Naive thymus-derived CD4-positive, alpha-beta T cell (primary cell): ENCODE measurements at regions of chr11 and their contacts with region 1.

Region 1: GRCh38 chr11:129364143-129364654 is 11.4 kb upstream of the BARX2 start:
- DNase-seq: peak; percentile 47 to 80 (median 71)
- ATAC-seq: peak; percentile 99
- H3K4me3 ChIP-seq: no peak overlapping the region
- H3K4me3 Mint-ChIP-seq: no peak overlapping the region
- H3K27ac ChIP-seq: no peak overlapping the region
- H3K27ac Mint-ChIP-seq: no peak overlapping the region
- H3K4me1 ChIP-seq: peaks cover 0 to 4% of the 10 kb centered on the region in 2 donors
- H3K4me1 Mint-ChIP-seq: no peaks in the 10 kb centered on the region
- H3K27me3 ChIP-seq: peaks cover 0 to 3% of the 10 kb centered on the region in 2 donors
- H3K27me3 Mint-ChIP-seq: peaks cover 17 to 59% (median 56%) of the 10 kb centered on the region in 5 donors

Region 2: DNA sequence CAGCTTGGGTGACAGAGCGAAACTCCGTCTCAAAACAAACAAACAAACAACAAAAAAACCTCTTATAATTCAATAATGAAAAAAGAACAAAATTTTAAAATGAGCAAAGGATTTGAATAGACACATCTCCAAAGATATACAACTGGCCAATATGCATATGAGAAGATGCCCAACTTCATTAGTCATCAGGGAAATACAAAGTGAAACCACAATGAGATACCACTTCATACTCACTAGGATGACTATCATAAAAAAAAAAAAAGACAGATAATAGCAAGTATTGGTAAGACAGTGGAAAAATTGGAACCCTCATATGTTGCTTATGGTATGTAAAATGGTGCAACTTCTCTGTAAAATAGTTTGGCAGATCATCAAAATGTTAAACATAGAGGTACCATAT is 17.3 kb before region 1 on chr11:
- CTCF ChIA-PET with region 1: interaction called, 3 read pairs
- POLR2A ChIA-PET with region 1: no interaction called
- intact Hi-C with region 1: loop called in 1 of 2 experiments (anchors 1 kb)
- DNase-seq: no peak
- ATAC-seq: no peak
- H3K4me3 ChIP-seq: no peak overlapping the region
- H3K4me3 Mint-ChIP-seq: no peak overlapping the region
- H3K27ac ChIP-seq: no peak overlapping the region
- H3K27ac Mint-ChIP-seq: no peak overlapping the region
- H3K4me1 ChIP-seq: no peaks in the 10 kb centered on the region
- H3K4me1 Mint-ChIP-seq: peaks cover 0 to 6% (median 0%) of the 10 kb centered on the region in 7 donors
- H3K27me3 ChIP-seq: no peaks in the 10 kb centered on the region
- H3K27me3 Mint-ChIP-seq: peaks cover 0 to 13% (median under 1%) of the 10 kb centered on the region in 5 donors

Region 3: GRCh38 chr11:129383060-129383459 is 18.9 kb after region 1 on chr11:
- CTCF ChIA-PET with region 1: no interaction called
- POLR2A ChIA-PET with region 1: no interaction called
- intact Hi-C with region 1: no loop called
- DNase-seq: no peak
- ATAC-seq: no peak
- H3K4me3 ChIP-seq: no peak overlapping the region
- H3K4me3 Mint-ChIP-seq: no peak overlapping the region
- H3K27ac ChIP-seq: no peak overlapping the region
- H3K27ac Mint-ChIP-seq: no peak overlapping the region
- H3K4me1 ChIP-seq: no peaks in the 10 kb centered on the region
- H3K4me1 Mint-ChIP-seq: no peaks in the 10 kb centered on the region
- H3K27me3 ChIP-seq: no peaks in the 10 kb centered on the region
- H3K27me3 Mint-ChIP-seq: peaks cover 50 to 75% (median 64%) of the 10 kb centered on the region in 5 donors

Region 4: GRCh38 chr11:129695575-129696308 is 331.5 kb after region 1 on chr11:
- CTCF ChIA-PET with region 1: interaction called, 3 read pairs
- POLR2A ChIA-PET with region 1: no interaction called
- intact Hi-C with region 1: loop called (anchors 1 kb)
- DNase-seq: peak; percentile 43 to 75 (median 68)
- ATAC-seq: peak; percentile 88
- H3K4me3 ChIP-seq: peak overlapping the region; percentile 72
- H3K4me3 Mint-ChIP-seq: peak overlapping the region; percentile 71 to 89 (median 85)
- H3K27ac ChIP-seq: peak overlapping the region; percentile 58
- H3K27ac Mint-ChIP-seq: peak overlapping the region in 6 of 9 donors; percentile 12 to 83 (median 22)
- H3K4me1 ChIP-seq: peaks cover 0 to 6% of the 10 kb centered on the region in 2 donors
- H3K4me1 Mint-ChIP-seq: peaks cover 0 to 12% (median 5%) of the 10 kb centered on the region in 7 donors
- H3K27me3 ChIP-seq: no peaks in the 10 kb centered on the region
- H3K27me3 Mint-ChIP-seq: peaks cover 0 to 10% (median 5%) of the 10 kb centered on the region in 5 donors

Region 5: DNA sequence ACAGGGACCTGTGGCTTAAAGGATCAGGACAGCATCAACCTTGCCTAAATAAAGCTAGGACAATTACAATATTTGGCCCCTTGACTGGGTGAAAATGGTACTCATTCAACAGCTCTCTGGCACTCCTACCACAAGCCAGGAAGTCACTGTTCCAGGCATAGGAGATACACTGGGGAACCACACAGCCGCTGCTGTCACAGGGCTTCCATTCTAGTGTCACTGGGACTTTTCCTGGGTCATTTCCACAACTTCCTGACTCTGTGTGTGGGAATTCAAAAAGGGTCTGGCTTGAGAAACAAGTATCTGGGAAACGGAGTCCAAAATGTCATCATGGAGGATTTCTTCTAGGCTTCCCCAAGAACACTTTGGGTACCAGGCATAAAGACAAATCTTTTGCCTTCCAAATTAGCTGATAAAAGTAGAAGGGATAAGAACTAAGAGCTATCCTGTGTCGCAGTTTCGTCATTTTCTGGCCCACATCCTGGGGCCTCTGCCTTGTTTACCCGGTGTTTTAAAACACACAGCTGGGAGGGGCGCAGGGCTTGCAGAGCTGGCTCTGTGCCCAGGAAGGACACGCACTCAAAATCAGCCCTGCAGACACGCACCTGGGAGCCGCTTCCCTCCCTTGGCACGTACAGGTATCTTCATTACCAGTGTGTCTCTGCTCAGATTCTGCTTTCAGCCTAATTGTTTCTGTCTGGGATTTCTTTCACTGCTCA is 489.5 kb after region 1 on chr11:
- CTCF ChIA-PET with region 1: no interaction called
- POLR2A ChIA-PET with region 1: no interaction called
- intact Hi-C with region 1: no loop called
- DNase-seq: peak; percentile 34 to 96 (median 93)
- ATAC-seq: peak; percentile 94
- H3K4me3 ChIP-seq: peak overlapping the region; percentile 21
- H3K4me3 Mint-ChIP-seq: peak overlapping the region; percentile 49 to 84 (median 74)
- H3K27ac ChIP-seq: peak overlapping the region; percentile 68
- H3K27ac Mint-ChIP-seq: peak overlapping the region; percentile 94 to 99 (median 98)
- H3K4me1 ChIP-seq: peaks cover 14 to 24% of the 10 kb centered on the region in 2 donors
- H3K4me1 Mint-ChIP-seq: peaks cover 17 to 68% (median 51%) of the 10 kb centered on the region in 7 donors
- H3K27me3 ChIP-seq: no peaks in the 10 kb centered on the region
- H3K27me3 Mint-ChIP-seq: peaks cover 0 to 2% (median 0%) of the 10 kb centered on the region in 5 donors

Region 6: DNA sequence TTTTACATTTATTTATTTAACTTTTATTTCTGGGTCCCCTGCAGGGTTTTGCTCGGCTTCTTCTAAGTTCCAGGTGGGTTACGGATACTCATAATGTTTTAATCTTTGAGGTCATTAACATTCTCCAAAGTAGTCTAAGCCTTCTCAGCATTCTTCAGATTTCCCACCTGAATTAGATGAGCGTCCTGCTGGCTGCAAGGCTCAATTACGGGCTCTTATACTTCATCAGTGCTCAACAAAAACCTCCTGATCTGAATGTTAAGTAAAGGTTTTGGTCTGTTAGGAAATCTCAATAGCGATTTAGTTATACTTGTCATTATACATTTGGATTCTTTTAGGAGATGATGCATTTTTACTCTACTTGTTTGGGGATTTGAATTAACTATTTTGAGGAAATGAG is 558.5 kb after region 1 on chr11:
- CTCF ChIA-PET with region 1: no interaction called
- POLR2A ChIA-PET with region 1: no interaction called
- intact Hi-C with region 1: loop called in 1 of 2 experiments (anchors 5 kb)
- DNase-seq: peak in 1 of 9 donors; percentile 0
- ATAC-seq: no peak
- H3K4me3 ChIP-seq: no peak overlapping the region
- H3K4me3 Mint-ChIP-seq: peak overlapping the region in 1 of 10 donors; percentile 35
- H3K27ac ChIP-seq: no peak overlapping the region
- H3K27ac Mint-ChIP-seq: peak overlapping the region in 7 of 9 donors; percentile 13 to 58 (median 28)
- H3K4me1 ChIP-seq: peaks cover 0 to 4% of the 10 kb centered on the region in 2 donors
- H3K4me1 Mint-ChIP-seq: peaks cover 6 to 22% (median 18%) of the 10 kb centered on the region in 7 donors
- H3K27me3 ChIP-seq: no peaks in the 10 kb centered on the region
- H3K27me3 Mint-ChIP-seq: no peaks in the 10 kb centered on the region